Naive thymus-derived CD4-positive, alpha-beta T cell (primary cell): ENCODE measurements at regions of chr10 and their contacts with region 1.

Region 1: GRCh38 chr10:86376852-86377796 is 10.5 kb upstream of the GRID1 start:
- DNase-seq: peak; percentile 52 to 92 (median 78)
- ATAC-seq: peak; percentile 98
- H3K4me3 ChIP-seq: no peak overlapping the region
- H3K4me3 Mint-ChIP-seq: peak overlapping the region in 5 of 10 donors; percentile 23 to 60 (median 32)
- H3K27ac ChIP-seq: no peak overlapping the region
- H3K27ac Mint-ChIP-seq: peak overlapping the region in 1 of 9 donors; percentile 41
- H3K4me1 ChIP-seq: no peaks in the 10 kb centered on the region
- H3K4me1 Mint-ChIP-seq: peaks cover 0 to 4% (median 0%) of the 10 kb centered on the region in 7 donors
- H3K27me3 ChIP-seq: peaks cover 0 to 5% of the 10 kb centered on the region in 2 donors
- H3K27me3 Mint-ChIP-seq: peaks cover 14 to 54% (median 39%) of the 10 kb centered on the region in 5 donors

Region 2: DNA sequence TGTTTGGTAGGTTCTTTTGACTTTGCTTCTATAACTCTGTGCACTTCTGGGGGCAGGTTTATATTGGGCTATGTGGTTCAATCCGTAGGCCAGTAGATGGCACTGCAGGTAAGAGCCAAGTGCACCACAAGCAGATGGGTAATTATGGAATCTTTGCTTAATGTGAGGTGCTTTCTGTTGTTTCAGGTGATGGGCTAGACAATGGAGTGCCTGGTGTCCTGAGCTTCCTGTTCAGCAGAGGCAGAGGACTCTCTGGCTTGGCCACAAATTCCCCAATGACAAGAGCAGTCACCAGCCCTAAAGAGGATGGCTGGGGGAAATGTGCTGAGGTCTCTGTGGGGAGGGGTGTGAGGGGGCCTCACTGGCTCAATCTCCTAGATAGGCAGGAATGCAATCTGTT is 1593.7 kb before region 1 on chr10:
- CTCF ChIA-PET with region 1: no interaction called
- POLR2A ChIA-PET with region 1: no interaction called
- intact Hi-C with region 1: loop called in 1 of 2 experiments (anchors 5 kb)
- DNase-seq: no peak
- ATAC-seq: no peak
- H3K4me3 ChIP-seq: no peak overlapping the region
- H3K4me3 Mint-ChIP-seq: no peak overlapping the region
- H3K27ac ChIP-seq: no peak overlapping the region
- H3K27ac Mint-ChIP-seq: no peak overlapping the region
- H3K4me1 ChIP-seq: no peaks in the 10 kb centered on the region
- H3K4me1 Mint-ChIP-seq: no peaks in the 10 kb centered on the region
- H3K27me3 ChIP-seq: no peaks in the 10 kb centered on the region
- H3K27me3 Mint-ChIP-seq: peaks cover 2 to 18% (median 6%) of the 10 kb centered on the region in 5 donors

Region 3: GRCh38 chr10:84924131-84924530 is 1453.0 kb before region 1 on chr10:
- CTCF ChIA-PET with region 1: no interaction called
- POLR2A ChIA-PET with region 1: no interaction called
- intact Hi-C with region 1: loop called in 1 of 2 experiments (anchors 1 kb)
- DNase-seq: no peak
- ATAC-seq: no peak
- H3K4me3 ChIP-seq: no peak overlapping the region
- H3K4me3 Mint-ChIP-seq: no peak overlapping the region
- H3K27ac ChIP-seq: no peak overlapping the region
- H3K27ac Mint-ChIP-seq: no peak overlapping the region
- H3K4me1 ChIP-seq: no peaks in the 10 kb centered on the region
- H3K4me1 Mint-ChIP-seq: no peaks in the 10 kb centered on the region
- H3K27me3 ChIP-seq: no peaks in the 10 kb centered on the region
- H3K27me3 Mint-ChIP-seq: peaks cover 0 to 10% (median 5%) of the 10 kb centered on the region in 5 donors

Region 4: DNA sequence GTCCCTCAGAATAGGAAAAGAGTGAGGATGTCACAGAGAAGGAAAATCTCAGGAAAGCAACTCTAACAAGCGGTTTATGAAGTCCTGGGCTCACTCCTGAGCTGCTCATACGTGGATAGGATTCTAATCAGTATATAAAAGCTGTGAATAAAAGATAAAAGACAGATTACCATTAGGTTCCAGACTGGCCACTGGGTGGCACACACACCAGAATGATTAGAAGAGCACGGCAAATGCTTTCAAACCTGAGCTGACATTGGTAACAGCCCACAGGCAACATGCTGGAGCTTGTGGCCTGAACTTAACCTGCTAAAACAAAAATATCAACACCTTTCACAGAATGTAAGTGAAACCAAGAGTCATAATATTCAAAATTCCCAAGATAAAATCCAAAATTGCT is 381.3 kb before region 1 on chr10:
- CTCF ChIA-PET with region 1: interaction called, 3 read pairs
- POLR2A ChIA-PET with region 1: no interaction called
- intact Hi-C with region 1: loop called (anchors 2 to 5 kb)
- DNase-seq: peak in 1 of 9 donors; percentile 19
- ATAC-seq: no peak
- H3K4me3 ChIP-seq: no peak overlapping the region
- H3K4me3 Mint-ChIP-seq: no peak overlapping the region
- H3K27ac ChIP-seq: no peak overlapping the region
- H3K27ac Mint-ChIP-seq: no peak overlapping the region
- H3K4me1 ChIP-seq: no peaks in the 10 kb centered on the region
- H3K4me1 Mint-ChIP-seq: no peaks in the 10 kb centered on the region
- H3K27me3 ChIP-seq: no peaks in the 10 kb centered on the region
- H3K27me3 Mint-ChIP-seq: peaks cover 7 to 44% (median 17%) of the 10 kb centered on the region in 5 donors

Region 5: GRCh38 chr10:86178401-86179152 is 198.5 kb before region 1 on chr10:
- CTCF ChIA-PET with region 1: no interaction called
- POLR2A ChIA-PET with region 1: no interaction called
- intact Hi-C with region 1: loop called in 1 of 2 experiments (anchors 5 kb)
- DNase-seq: no peak
- ATAC-seq: no peak
- H3K4me3 ChIP-seq: no peak overlapping the region
- H3K4me3 Mint-ChIP-seq: no peak overlapping the region
- H3K27ac ChIP-seq: no peak overlapping the region
- H3K27ac Mint-ChIP-seq: no peak overlapping the region
- H3K4me1 ChIP-seq: no peaks in the 10 kb centered on the region
- H3K4me1 Mint-ChIP-seq: no peaks in the 10 kb centered on the region
- H3K27me3 ChIP-seq: no peaks in the 10 kb centered on the region
- H3K27me3 Mint-ChIP-seq: peaks cover 0 to 8% (median 0%) of the 10 kb centered on the region in 5 donors

Region 6: GRCh38 chr10:86521678-86522509 is 144.8 kb after region 1 on chr10 and contains the start of gene WAPL:
- CTCF ChIA-PET with region 1: no interaction called
- POLR2A ChIA-PET with region 1: no interaction called
- intact Hi-C with region 1: no loop called
- DNase-seq: peak; percentile 91 to 98 (median 94)
- ATAC-seq: peak; percentile 98
- H3K4me3 ChIP-seq: peak within 1 kb of the TSS; percentile 85
- H3K4me3 Mint-ChIP-seq: peak within 1 kb of the TSS; percentile 86 to 99 (median 96)
- H3K27ac ChIP-seq: peak within 1 kb of the TSS; percentile 97
- H3K27ac Mint-ChIP-seq: peak within 1 kb of the TSS; percentile 83 to 96 (median 94)
- H3K4me1 ChIP-seq: peaks cover 32 to 38% of the 10 kb centered on the region in 2 donors
- H3K4me1 Mint-ChIP-seq: peaks cover 41 to 75% (median 56%) of the 10 kb centered on the region in 7 donors
- H3K27me3 ChIP-seq: no peaks in the 10 kb centered on the region
- H3K27me3 Mint-ChIP-seq: no peaks in the 10 kb centered on the region
- total RNA-seq, gene WAPL: 40.3 to 59.2 (median 53.4) TPM